ENCODE measurements at regions of chr17 and their contacts with region 1.

Region 1: DNA sequence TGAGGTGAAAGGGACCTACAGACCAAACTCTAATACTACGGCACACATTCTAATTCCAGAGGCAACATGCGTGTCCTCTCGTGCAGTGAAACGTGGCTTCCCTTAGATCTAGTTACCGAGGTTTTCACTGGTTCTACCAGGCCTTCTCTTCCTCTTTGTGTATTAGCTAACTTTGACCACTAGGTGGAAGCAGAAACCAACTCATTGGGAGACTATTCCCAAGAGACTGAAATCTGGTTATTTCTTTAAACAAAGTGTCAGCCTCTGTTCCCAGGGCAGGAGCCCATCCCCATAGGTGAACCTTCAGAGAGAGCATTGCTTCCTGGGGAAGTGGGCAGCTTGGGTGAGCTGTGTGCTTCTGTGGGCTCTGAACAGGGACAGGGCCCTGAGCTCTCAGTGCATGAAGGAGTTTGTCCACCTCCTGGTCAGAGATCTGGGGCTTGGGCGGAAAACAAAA is 19.7 kb upstream of the RCVRN start:
- DNase-seq: peak; percentile 81
- ATAC-seq: peak; percentile 80
- H3K4me3 ChIP-seq: no peak overlapping the region
- H3K27ac ChIP-seq: no peak overlapping the region
- H3K4me1 ChIP-seq: peaks cover 6 to 21% of the 10 kb centered on the region in 2 experiments
- H3K27me3 ChIP-seq: 0 out of 2 replicates have a peak, but pooled peaks cover 1% of the 10 kb centered on the region
- CTCF ChIP-seq: peak; percentile 78 to 86 (median 80)
- POLR2A ChIP-seq: no peak
- RAD21 ChIP-seq: peak; percentile 88

Region 2: DNA sequence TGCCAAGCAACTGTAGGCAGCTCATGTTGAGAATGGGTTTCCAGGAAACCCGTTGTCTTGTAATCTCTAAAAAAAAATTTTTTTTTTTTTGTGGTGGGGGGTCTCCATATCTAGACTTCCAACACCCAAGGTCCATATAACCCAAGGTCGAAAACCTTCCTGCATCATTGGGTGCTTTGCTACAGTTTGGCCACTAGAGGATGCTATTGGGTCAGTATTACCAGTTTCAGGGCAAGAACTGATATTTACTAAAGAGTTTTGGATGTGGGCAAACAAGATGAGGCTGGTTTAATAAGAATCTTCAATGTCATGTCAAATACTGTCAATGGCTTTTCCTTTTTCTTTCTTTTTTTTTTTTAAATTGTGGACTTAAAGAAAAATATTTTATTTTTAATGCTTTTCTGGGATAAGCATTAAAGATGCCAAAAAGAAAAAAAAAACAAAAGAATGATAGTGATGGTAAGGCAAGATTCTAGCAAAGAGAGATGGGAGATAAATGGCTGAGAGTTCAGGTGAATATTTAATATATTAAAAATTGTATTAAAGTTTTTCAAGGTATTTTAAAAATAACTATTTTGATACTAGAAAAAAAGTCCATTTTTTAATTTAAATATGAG is 195.6 kb before region 1 on chr17:
- CTCF ChIA-PET with region 1: interaction called, 5 read pairs
- POLR2A ChIA-PET with region 1: no interaction called
- RAD21 ChIA-PET with region 1: interaction called in 1 of 2 experiments, 4 read pairs
- intact Hi-C with region 1: loop called (anchors 1 kb)
- DNase-seq: peak; percentile 23
- ATAC-seq: peak; percentile 58; the same call in 1 of the 2 replicates
- H3K4me3 ChIP-seq: no peak overlapping the region
- H3K27ac ChIP-seq: no peak overlapping the region
- H3K4me1 ChIP-seq: peaks cover 3 to 9% of the 10 kb centered on the region in 2 experiments; a peak in 2 of 4 replicates
- H3K27me3 ChIP-seq: no peaks in the 10 kb centered on the region
- CTCF ChIP-seq: peak; percentile 77 to 97 (median 95)
- POLR2A ChIP-seq: no peak
- RAD21 ChIP-seq: peak; percentile 85

Region 3: DNA sequence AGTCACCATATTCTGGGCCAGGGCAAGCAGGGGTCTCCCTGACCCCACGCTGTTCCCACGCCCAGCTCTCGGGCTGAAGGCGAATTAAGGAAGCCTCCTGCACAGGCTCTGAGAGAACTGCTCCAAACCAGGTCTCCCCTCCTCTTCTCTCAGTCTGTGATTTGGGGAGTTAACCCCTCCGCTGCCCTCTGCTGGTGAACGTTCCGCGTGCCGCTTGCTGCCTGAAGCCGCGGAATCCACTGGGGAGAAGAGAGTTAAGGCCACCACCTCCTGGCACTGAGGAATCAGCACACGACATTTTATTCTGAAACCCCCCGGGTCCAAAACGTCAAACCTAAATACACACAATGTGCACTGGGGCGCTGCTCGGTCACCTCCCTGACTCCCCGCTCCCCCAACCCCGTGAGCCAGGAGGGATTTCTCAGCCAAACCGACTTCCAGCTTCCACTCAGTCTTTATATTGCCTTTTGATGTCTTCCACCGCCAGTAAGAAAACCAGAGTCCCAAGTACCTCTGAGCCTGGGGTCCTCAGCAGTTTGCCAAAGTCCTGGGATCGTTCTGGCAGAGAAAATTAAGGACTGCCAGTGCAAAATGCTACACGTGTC is 34.7 kb after region 1 on chr17:
- CTCF ChIA-PET with region 1: interaction called, 5 read pairs
- POLR2A ChIA-PET with region 1: no interaction called
- RAD21 ChIA-PET with region 1: no interaction called
- intact Hi-C with region 1: loop called (anchors 1 kb)
- DNase-seq: peak; percentile 28
- ATAC-seq: peak; percentile 94
- H3K4me3 ChIP-seq: no peak overlapping the region
- H3K27ac ChIP-seq: no peak overlapping the region
- H3K4me1 ChIP-seq: no peaks in the 10 kb centered on the region
- H3K27me3 ChIP-seq: peaks cover 13% of the 10 kb centered on the region; the same call in 1 of the 2 replicates
- CTCF ChIP-seq: peak; percentile 60 to 79 (median 77); a peak in 5 of 6 replicates
- POLR2A ChIP-seq: no peak
- RAD21 ChIP-seq: peak; percentile 46

Region 4: GRCh38 chr17:9982159-9982558 is 57.4 kb after region 1 on chr17:
- CTCF ChIA-PET with region 1: interaction called, 25 read pairs
- POLR2A ChIA-PET with region 1: no interaction called
- RAD21 ChIA-PET with region 1: interaction called in 1 of 2 experiments, 3 read pairs
- intact Hi-C with region 1: no loop called
- DNase-seq: peak; percentile 27
- ATAC-seq: peak; percentile 88
- H3K4me3 ChIP-seq: no peak overlapping the region
- H3K27ac ChIP-seq: no peak overlapping the region
- H3K4me1 ChIP-seq: no peaks in the 10 kb centered on the region
- H3K27me3 ChIP-seq: no peaks in the 10 kb centered on the region
- CTCF ChIP-seq: peak; percentile 43 to 60 (median 52); a peak in 5 of 6 replicates
- POLR2A ChIP-seq: no peak
- RAD21 ChIP-seq: peak; percentile 50

Region 5: GRCh38 chr17:10018461-10018891 is 93.7 kb after region 1 on chr17:
- CTCF ChIA-PET with region 1: no interaction called
- POLR2A ChIA-PET with region 1: no interaction called
- RAD21 ChIA-PET with region 1: no interaction called
- intact Hi-C with region 1: no loop called
- DNase-seq: no peak
- ATAC-seq: no peak
- H3K4me3 ChIP-seq: no peak overlapping the region
- H3K27ac ChIP-seq: no peak overlapping the region
- H3K4me1 ChIP-seq: no peaks in the 10 kb centered on the region
- H3K27me3 ChIP-seq: no peaks in the 10 kb centered on the region; the same call in 1 of the 2 replicates
- CTCF ChIP-seq: no peak
- POLR2A ChIP-seq: no peak
- RAD21 ChIP-seq: no peak